ENCODE measurements at regions of chr9 and their contacts with region 1.

Region 1: DNA sequence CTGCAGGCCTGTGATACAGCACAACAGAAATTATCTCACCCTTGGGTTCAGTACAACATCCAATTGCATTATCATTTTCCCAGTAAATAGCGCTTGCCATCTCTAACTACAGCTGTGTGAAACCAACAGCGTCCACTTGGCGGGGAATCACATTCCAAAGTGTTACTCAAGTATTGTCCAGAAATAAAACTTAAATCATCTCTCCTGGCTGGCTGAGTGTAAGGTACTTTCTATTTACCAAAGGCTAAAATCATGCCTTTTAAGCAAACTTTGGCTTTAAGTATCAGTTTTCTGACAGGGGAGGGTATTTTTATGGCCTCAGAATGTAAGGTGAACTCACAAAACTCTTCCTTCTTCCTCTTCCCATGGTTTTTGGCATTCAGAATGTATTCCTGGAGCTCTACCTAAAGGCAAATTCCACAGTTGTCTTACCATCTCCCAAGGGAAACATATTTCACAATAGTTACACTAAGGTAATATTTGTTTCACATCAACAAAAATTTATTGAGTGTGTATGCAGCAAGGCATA is 205.6 kb upstream of the MPDZ start:
- DNase-seq: peak; percentile 85
- H3K4me3 Mint-ChIP-seq: peak overlapping the region; percentile 30
- H3K27ac Mint-ChIP-seq: peak overlapping the region; percentile 84
- H3K4me1 Mint-ChIP-seq: peaks cover 47% of the 10 kb centered on the region
- H3K27me3 Mint-ChIP-seq: no peaks in the 10 kb centered on the region
- CTCF ChIP-seq: no peak

Region 2: GRCh38 chr9:13378154-13378553 is 107.0 kb before region 1 on chr9:
- CTCF ChIA-PET with region 1: no interaction called
- POLR2A ChIA-PET with region 1: no interaction called
- intact Hi-C with region 1: no loop called
- DNase-seq: no peak
- H3K4me3 Mint-ChIP-seq: no peak overlapping the region
- H3K27ac Mint-ChIP-seq: no peak overlapping the region
- H3K4me1 Mint-ChIP-seq: no peaks in the 10 kb centered on the region
- H3K27me3 Mint-ChIP-seq: no peaks in the 10 kb centered on the region
- CTCF ChIP-seq: no peak

Region 3: GRCh38 chr9:13898957-13899356 is 413.8 kb after region 1 on chr9:
- CTCF ChIA-PET with region 1: no interaction called
- POLR2A ChIA-PET with region 1: interaction called, 26 read pairs
- intact Hi-C with region 1: no loop called
- DNase-seq: peak; percentile 15
- H3K4me3 Mint-ChIP-seq: no peak overlapping the region
- H3K27ac Mint-ChIP-seq: peak overlapping the region; percentile 98
- H3K4me1 Mint-ChIP-seq: peaks cover 50% of the 10 kb centered on the region
- H3K27me3 Mint-ChIP-seq: no peaks in the 10 kb centered on the region
- CTCF ChIP-seq: no peak

Region 4: GRCh38 chr9:14096258-14096922 is 611.3 kb after region 1 on chr9:
- CTCF ChIA-PET with region 1: no interaction called
- POLR2A ChIA-PET with region 1: no interaction called
- intact Hi-C with region 1: loop called (anchors 1 kb)
- DNase-seq: peak; percentile 72
- H3K4me3 Mint-ChIP-seq: peak overlapping the region; percentile 63
- H3K27ac Mint-ChIP-seq: peak overlapping the region; percentile 80
- H3K4me1 Mint-ChIP-seq: peaks cover 29% of the 10 kb centered on the region
- H3K27me3 Mint-ChIP-seq: no peaks in the 10 kb centered on the region
- CTCF ChIP-seq: no peak

Measured in MCF 10A (cell line).